ENCODE measurements at regions of chr1 and their contacts with region 1.

Region 1: DNA sequence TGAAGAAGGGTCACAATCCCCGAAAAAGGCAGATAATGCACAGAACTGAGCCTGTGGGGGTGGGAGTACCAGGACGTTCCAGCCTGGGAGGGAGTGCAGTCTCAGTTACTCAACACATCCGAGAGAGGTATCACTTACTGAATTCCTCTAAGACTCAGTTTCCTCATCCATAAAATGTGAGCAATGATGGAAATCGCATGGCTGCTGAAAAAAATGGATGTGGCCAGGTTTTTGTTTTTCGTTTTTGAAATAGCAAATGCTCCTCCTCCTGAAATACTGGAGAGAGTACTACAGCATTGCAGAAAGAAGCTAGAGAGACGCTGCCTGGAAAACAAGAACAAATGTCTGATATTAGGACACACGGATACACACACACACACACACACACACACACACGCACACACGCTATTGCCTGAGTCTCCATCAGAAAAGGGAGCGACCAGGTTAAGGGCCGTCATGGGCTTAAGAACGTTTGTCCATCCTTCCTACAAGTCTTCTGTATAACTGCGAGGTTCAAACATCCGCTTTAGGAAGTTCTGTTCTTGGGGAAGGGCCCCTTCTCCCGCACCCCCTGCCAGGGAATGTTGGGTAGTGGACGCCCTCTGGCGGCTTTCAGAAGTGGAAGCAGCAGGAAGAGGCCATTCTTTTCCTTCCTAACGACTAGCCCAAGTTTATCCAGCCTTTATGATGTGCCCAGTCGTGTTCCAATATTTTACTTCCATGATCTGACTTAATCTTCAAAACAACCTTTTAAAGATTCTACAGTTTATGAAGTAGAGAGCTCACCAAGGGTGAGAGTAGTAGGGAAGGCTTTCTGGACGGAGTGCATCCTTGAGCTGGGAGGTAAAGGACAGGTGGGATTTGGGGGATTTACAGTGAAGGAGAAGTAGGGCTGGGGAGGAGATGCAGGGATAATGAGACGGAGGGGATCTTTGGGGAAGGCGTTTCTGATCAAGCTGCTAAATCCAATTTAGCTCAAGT is 699 bp upstream of the NES start:
- DNase-seq: peak; percentile 67 to 73 (median 68)
- H3K4me3 ChIP-seq: peak overlapping the region in 2 of 7 experiments; percentile 20 to 24
- H3K27ac ChIP-seq: no peak overlapping the region
- H3K4me1 ChIP-seq: peaks cover 0 to 16% (median 12%) of the 10 kb centered on the region in 4 experiments
- H3K27me3 ChIP-seq: peaks cover 0 to 88% (median 33%) of the 10 kb centered on the region in 5 experiments

Region 2: DNA sequence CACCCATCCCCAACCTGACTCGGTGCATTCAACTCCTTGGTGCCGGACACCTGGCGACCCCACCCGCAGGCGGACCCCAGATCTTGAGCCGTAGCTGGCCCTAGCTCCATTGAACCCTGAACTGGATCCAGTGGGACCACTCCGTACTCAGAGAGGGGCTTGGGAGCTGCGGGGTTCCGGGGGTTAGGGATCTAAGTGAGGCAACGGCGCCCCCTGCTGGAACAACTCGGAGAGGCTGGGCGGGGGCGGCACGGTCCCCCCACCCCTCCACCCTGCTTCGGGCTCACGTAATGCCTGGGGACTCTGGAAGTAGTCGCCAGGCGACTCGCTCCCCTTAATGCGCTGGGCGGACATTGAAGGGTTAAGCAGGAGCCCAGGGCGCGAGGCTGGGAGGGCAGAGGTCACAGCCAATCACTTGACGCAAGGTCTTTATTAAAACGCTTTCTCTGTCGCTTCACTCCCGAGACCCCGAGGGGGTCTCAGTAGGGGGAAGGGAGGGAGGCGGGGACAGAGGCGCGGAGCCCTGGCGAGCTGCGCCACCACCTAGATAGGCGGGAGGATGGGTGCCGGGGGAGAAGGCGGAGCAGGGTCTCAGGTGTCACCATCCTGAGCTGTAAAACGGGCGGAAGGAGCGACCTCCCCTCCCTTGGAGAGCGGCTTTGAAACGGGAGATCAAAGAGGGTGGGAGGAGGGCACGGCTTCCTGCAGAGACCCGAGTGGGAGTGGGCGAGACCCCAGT is 28.2 kb after region 1 on chr1:
- CTCF ChIA-PET with region 1: interaction called, 236 read pairs
- POLR2A ChIA-PET with region 1: no interaction called
- DNase-seq: peak; percentile 50 to 75 (median 73)
- H3K4me3 ChIP-seq: peak overlapping the region in 6 of 7 experiments; percentile 19 to 70 (median 52)
- H3K27ac ChIP-seq: no peak overlapping the region
- H3K4me1 ChIP-seq: peaks cover 0 to 27% (median 21%) of the 10 kb centered on the region in 4 experiments
- H3K27me3 ChIP-seq: peaks cover 7 to 75% (median 30%) of the 10 kb centered on the region in 5 experiments